ENCODE measurements at regions of chr3 and their contacts with region 1.

Region 1: DNA sequence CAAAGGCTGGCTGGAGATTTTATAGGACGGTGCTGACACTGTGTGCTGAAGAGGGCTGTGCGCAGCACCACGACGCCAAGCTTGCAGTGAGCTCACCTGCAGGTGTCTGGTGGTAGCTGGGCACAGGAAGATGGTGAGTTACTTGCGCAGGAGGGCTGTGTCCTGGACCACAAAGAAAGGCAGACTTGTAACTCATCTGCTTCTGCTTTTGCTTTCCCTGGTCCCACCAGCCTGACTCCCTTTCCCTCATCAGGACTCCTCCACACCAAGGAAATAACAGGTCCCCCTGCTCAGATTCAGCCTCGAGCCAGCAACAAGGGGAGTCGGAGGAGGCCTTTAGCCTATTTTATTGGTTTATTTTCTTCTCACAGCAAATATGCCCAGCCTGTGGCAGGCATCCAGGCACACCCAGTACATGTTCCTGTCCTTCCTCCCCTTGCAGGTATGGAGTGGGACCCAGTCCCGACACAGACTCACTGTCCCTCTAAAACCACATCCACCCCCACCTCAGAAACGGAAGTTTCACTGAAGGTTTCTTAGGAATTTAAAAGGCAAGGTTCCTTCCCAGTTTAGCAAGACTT is 35.6 kb upstream of the FLNB start:
- DNase-seq: no peak
- ATAC-seq: no peak
- H3K4me3 Mint-ChIP-seq: no peak overlapping the region
- H3K27ac Mint-ChIP-seq: peak overlapping the region; percentile 69; the same call in 1 of the 2 replicates
- H3K4me1 Mint-ChIP-seq: peaks cover 27% of the 10 kb centered on the region
- H3K27me3 Mint-ChIP-seq: no peaks in the 10 kb centered on the region
- CTCF ChIP-seq: no peak

Region 2: GRCh38 chr3:57961828-57962447 is 10.7 kb before region 1 on chr3:
- CTCF ChIA-PET with region 1: interaction called, 12 read pairs
- POLR2A ChIA-PET with region 1: no interaction called
- DNase-seq: no peak
- ATAC-seq: peak; percentile 73
- H3K4me3 Mint-ChIP-seq: no peak overlapping the region
- H3K27ac Mint-ChIP-seq: no peak overlapping the region; the same call in 1 of the 2 replicates
- H3K4me1 Mint-ChIP-seq: peaks cover 6% of the 10 kb centered on the region
- H3K27me3 Mint-ChIP-seq: no peaks in the 10 kb centered on the region
- CTCF ChIP-seq: peak; percentile 15; the same call in 1 of the 2 replicates

Measured in WTC11 (cell line).